PC-3 (cell line): ENCODE measurements at regions of chr9 and their contacts with region 1.

Region 1: GRCh38 chr9:12702160-12702758 is 9.1 kb downstream of the TYRP1 start:
- DNase-seq: peak; percentile 70
- ATAC-seq: peak; percentile 54
- H3K4me3 ChIP-seq: peak overlapping the region; percentile 52; the same call in 1 of the 2 replicates
- H3K27ac ChIP-seq: no peak overlapping the region
- H3K4me1 ChIP-seq: peaks cover 17% of the 10 kb centered on the region
- H3K27me3 ChIP-seq: no peaks in the 10 kb centered on the region
- CTCF ChIP-seq: peak; percentile 81

Region 2: DNA sequence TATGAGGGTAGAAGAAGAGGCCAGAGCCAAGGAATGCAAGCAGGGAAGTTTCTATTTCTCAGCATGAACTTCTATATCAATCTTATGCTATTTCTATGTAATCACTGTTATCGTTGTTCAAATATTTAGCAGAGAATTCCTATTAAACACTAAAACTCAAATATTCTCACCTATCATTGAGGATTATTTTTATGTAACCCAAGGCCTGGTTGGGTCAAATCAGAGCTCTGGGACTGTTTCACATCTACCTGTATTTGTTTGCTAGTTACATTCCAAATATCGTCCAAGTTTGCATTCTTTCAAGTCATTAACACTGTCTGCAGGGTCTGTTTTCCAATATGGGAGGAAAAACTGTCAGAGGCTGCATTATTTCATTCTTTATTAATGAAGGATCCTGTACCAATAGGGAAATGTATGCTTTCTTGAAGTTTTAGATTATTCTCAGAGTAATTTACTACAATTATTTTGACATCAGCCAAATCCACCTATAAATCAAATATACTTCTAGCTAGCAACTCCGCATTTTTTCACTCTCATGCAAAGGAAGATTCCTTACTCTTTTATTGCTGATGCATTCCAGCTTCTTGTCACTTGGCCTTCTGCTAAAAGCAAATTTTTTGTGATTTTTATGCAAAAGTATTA is 124.8 kb after region 1 on chr9:
- CTCF ChIA-PET with region 1: no interaction called
- POLR2A ChIA-PET with region 1: no interaction called
- intact Hi-C with region 1: no loop called
- DNase-seq: no peak
- ATAC-seq: no peak
- H3K4me3 ChIP-seq: no peak overlapping the region
- H3K27ac ChIP-seq: no peak overlapping the region
- H3K4me1 ChIP-seq: peaks cover 10% of the 10 kb centered on the region
- H3K27me3 ChIP-seq: no peaks in the 10 kb centered on the region
- CTCF ChIP-seq: no peak

Region 3: GRCh38 chr9:12988253-12988652 is 286.0 kb after region 1 on chr9:
- CTCF ChIA-PET with region 1: no interaction called
- POLR2A ChIA-PET with region 1: no interaction called
- intact Hi-C with region 1: loop called (anchors 5 kb)
- DNase-seq: no peak
- ATAC-seq: no peak
- H3K4me3 ChIP-seq: no peak overlapping the region
- H3K27ac ChIP-seq: no peak overlapping the region
- H3K4me1 ChIP-seq: no peaks in the 10 kb centered on the region
- H3K27me3 ChIP-seq: no peaks in the 10 kb centered on the region
- CTCF ChIP-seq: peak; percentile 33; the same call in 1 of the 2 replicates